ENCODE measurements at regions of chr7 and their contacts with region 1.

Region 1: DNA sequence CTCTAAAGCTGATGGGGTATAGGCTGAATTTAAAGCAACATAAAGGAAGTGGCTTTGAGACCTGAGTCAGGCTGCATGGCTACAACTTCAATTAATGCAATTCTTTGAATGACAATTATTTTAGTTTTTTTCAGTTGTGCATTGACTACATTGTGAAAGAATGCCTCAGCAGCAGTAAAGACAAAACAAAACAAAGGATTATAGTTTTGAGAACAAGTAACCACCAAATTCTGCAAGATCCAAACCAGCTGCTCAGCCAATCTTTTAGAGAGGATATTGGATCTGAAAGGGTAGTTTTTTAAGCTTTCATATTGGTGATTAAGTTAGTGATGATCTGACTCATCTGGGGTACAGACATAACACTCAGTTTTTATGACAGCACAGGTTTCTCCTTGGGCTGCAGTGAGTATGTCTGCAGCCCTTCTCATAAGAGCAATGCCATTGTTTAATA is 40.6 kb upstream of the ABCA13 start:
- DNase-seq: no peak
- H3K4me3 Mint-ChIP-seq: no peak overlapping the region
- H3K27ac Mint-ChIP-seq: no peak overlapping the region
- H3K4me1 Mint-ChIP-seq: peaks cover 5% of the 10 kb centered on the region
- H3K27me3 Mint-ChIP-seq: peaks cover 22% of the 10 kb centered on the region

Region 2: DNA sequence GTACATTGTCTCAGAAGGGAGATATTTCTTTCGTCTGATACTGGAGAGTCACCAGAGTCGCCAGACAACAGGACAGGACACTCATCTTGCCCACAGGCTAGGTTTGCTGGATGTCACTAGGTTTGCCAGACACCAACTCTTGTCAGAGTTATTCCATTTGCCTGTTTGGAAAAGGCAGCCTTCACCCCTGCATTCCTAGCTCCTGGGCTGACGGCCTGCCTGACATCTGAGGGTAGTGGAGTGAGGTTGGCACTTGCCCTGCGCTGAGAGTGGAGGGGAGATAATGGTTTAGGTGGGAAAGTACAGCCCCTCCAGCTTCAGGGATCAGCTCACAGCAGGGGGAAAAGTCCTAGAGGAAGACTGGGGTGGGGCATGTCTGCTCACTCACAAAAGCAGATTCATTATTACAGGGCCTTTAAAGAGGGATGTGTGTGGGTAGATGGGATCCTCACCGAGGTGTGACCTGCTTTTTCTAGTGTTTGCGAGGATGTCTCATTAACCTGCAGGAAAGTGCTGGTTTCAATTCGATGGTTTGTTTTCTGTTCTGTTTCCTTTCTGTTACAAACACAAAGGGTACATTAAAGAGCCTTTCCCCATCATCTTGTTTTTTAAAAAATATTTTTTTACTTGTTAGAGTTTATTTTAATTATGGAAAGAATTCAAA is 469.5 kb before region 1 on chr7:
- CTCF ChIA-PET with region 1: no interaction called
- POLR2A ChIA-PET with region 1: no interaction called
- intact Hi-C with region 1: no loop called
- DNase-seq: no peak
- H3K4me3 Mint-ChIP-seq: no peak overlapping the region
- H3K27ac Mint-ChIP-seq: no peak overlapping the region
- H3K4me1 Mint-ChIP-seq: no peaks in the 10 kb centered on the region
- H3K27me3 Mint-ChIP-seq: no peaks in the 10 kb centered on the region

Region 3: GRCh38 chr7:48251766-48252165 is 121.1 kb after region 1 on chr7:
- CTCF ChIA-PET with region 1: no interaction called
- POLR2A ChIA-PET with region 1: no interaction called
- intact Hi-C with region 1: loop called (anchors 5 kb)
- DNase-seq: no peak
- H3K4me3 Mint-ChIP-seq: no peak overlapping the region
- H3K27ac Mint-ChIP-seq: no peak overlapping the region
- H3K4me1 Mint-ChIP-seq: peaks cover 13% of the 10 kb centered on the region
- H3K27me3 Mint-ChIP-seq: peaks cover 4% of the 10 kb centered on the region

Region 4: DNA sequence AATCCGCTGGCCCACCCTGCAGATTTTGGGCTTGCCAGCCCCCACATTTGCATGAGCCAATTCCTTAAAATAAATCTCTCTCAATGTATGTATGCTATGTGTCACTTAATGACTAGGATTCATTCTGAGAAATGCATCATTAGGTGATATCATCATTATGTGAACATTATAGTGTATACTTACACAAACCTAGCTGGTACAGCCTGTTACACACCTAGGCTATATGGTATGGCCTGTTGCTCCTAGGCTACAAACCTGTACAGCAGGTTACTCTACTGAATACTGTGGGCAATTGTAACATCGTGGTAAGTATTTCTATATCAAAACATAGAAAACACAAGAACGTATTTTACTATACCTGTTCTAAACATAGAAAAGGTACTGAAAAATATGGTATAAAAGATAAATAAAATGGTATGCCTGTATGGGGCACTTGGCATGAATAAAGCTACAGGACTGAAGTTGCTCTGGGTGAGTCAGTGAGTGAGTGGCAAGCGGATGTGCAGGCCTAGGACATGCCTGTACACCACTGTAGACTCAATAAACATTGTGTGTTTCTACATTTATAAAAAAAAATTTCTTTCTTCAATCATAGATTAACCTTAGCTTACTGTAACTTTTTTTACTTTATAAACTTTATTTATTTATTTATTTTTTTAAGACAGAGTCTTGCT is 176.5 kb after region 1 on chr7:
- CTCF ChIA-PET with region 1: no interaction called
- POLR2A ChIA-PET with region 1: no interaction called
- intact Hi-C with region 1: no loop called
- DNase-seq: no peak
- H3K4me3 Mint-ChIP-seq: no peak overlapping the region
- H3K27ac Mint-ChIP-seq: no peak overlapping the region
- H3K4me1 Mint-ChIP-seq: no peaks in the 10 kb centered on the region
- H3K27me3 Mint-ChIP-seq: peaks cover 5% of the 10 kb centered on the region